Ovary (tissue), 10 donors: ENCODE measurements at regions of chr17 and their contacts with region 1.

Region 1: DNA sequence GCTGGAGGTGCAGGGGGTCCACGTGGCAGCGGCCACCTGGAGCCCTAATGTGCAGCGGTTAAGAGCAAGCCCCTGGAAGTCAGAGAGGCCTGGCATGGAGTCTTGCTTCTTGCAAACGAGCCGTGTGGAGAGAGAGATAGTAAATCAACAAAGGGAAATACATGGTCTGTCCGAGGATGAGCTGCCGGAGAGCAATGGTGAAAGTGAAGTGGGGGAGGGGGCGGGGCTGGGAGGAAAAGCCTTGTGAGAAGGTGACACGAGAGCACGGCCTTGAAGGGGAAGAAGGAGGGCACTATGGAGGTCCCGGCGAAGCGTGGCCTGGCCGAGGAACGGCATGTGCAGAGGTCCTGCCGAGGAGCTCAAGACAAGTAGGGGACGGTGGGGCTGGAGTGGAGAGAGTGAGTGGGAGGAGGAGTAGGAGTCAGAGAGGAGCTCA is 6.0 kb upstream of the SERPINF1 start:
- DNase-seq: no peak
- H3K4me3 ChIP-seq: no peak overlapping the region
- H3K27ac ChIP-seq: peak overlapping the region in 1 of 2 donors; percentile 17
- H3K4me1 ChIP-seq: peaks cover 10% of the 10 kb centered on the region
- H3K27me3 ChIP-seq: no peaks in the 10 kb centered on the region
- CTCF ChIP-seq: no peak
- EP300 ChIP-seq: no peak
- POLR2A ChIP-seq: no peak

Region 2: DNA sequence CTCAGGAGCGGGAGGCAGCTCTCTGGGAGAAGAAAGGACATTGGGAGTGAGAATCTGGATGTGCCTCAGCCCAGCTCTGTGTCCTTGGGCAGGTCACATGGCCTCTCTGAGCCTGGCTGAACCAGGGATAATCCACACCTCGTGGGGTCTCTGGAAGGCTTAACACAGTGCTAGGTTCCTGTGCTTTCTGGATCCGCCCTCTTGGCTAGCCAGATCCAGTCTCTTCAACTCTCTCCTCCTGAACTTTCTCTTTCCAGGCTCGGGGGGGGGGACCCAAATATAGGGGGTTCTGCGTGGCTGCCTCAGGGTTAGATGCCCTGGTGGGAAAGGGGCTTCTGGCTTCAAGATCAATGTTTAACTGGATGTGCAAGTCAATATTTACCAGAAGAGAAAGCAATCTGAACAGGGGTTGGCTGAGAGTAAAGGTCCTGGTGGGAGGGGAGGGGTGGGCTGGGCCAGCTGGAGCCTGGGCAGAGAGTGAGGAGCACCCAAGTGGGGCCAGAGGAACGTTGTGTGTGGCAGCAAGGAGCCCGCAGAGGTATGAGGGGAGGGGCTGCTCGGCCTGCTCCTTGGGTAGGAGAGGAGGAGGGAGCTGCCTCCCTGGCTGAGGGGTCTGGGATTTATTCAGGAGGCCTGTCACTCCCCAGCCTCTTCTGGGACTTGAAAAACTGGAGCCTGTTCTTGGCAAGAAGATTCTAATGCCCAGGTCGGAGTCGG is 13.3 kb before region 1 on chr17 and contains the start of gene SERPINF2:
- intact Hi-C with region 1: loop called in 1 of 4 experiments (anchors 2 kb)
- DNase-seq: peak in 1 of 5 donors; percentile 39
- H3K4me3 ChIP-seq: no peak within 1 kb of the TSS
- H3K27ac ChIP-seq: peak within 1 kb of the TSS in 1 of 2 donors; percentile 32
- H3K4me1 ChIP-seq: peaks cover 15% of the 10 kb centered on the region
- H3K27me3 ChIP-seq: no peaks in the 10 kb centered on the region
- CTCF ChIP-seq: no peak
- EP300 ChIP-seq: no peak
- POLR2A ChIP-seq: no peak
- total RNA-seq, gene SERPINF2: 2.6 to 45.2 (median 4.5) TPM